ENCODE measurements at regions of chr10 and their contacts with region 1.

Region 1: GRCh38 chr10:80144067-80144695 is 11.7 kb downstream of the PLAC9 start:
- DNase-seq: peak; percentile 36
- ATAC-seq: peak; percentile 69
- H3K4me3 Mint-ChIP-seq: peak overlapping the region; percentile 73
- H3K27ac Mint-ChIP-seq: peak overlapping the region; percentile 44
- H3K4me1 Mint-ChIP-seq: peaks cover 20% of the 10 kb centered on the region
- H3K27me3 Mint-ChIP-seq: peaks cover 6% of the 10 kb centered on the region

Region 2: GRCh38 chr10:80187465-80188409 is 43.6 kb after region 1 on chr10:
- CTCF ChIA-PET with region 1: interaction called, 12 read pairs
- POLR2A ChIA-PET with region 1: interaction called, 3 read pairs
- DNase-seq: peak; percentile 92
- ATAC-seq: peak; percentile 93
- H3K4me3 Mint-ChIP-seq: peak overlapping the region; percentile 55
- H3K27ac Mint-ChIP-seq: peak overlapping the region; percentile 89
- H3K4me1 Mint-ChIP-seq: peaks cover 69% of the 10 kb centered on the region
- H3K27me3 Mint-ChIP-seq: no peaks in the 10 kb centered on the region

Region 3: DNA sequence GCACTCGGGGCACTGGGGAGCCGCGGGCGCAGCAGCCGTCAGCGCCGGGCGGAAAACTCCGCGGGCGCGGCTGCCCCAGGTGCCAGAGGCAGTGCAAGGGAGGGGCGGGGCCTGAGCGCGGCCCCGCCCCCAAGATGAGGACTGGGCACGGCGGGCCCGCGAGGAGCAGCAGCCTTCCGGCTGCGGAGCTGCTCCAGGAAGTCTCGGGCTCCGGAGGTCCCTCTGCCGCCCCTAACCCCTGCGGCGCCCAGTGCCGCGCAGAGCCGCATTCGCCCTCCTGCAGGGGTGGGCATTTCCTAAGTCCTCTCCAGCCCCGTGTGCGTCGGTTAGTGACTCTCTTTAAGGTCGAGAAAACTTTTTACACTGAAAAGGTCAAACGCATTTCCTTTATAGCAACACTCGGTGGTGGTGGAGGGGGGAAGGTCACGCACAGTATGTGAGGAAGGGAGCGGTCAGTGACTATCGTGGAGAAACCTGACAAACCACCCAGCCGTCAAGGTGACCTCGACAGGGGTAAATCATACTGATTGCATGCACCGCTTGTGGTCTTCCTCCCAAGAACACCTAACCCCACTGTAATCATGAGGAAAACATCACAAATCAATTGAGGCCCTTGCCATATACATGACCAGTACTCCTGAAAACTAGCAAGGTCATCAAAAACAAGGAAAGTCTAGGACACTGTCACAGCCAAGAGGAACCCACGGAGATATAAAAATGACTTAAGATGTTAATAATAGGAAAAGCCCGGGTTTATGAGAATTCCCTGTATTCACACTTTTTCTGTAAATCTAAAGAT is 61.5 kb after region 1 on chr10 and contains the start of gene ANXA11:
- CTCF ChIA-PET with region 1: interaction called, 30 read pairs
- POLR2A ChIA-PET with region 1: interaction called, 3 read pairs
- DNase-seq: peak; percentile 88
- ATAC-seq: peak; percentile 87
- H3K4me3 Mint-ChIP-seq: peak within 1 kb of the TSS; percentile 95
- H3K27ac Mint-ChIP-seq: peak within 1 kb of the TSS; percentile 91
- H3K4me1 Mint-ChIP-seq: peaks cover 50% of the 10 kb centered on the region
- H3K27me3 Mint-ChIP-seq: no peaks in the 10 kb centered on the region
- total RNA-seq, gene ANXA11: 249 to 277 TPM

Region 4: GRCh38 chr10:80253266-80254245 is 109.4 kb after region 1 on chr10:
- CTCF ChIA-PET with region 1: interaction called, 20 read pairs
- POLR2A ChIA-PET with region 1: interaction called, 4 read pairs
- DNase-seq: peak; percentile 54
- ATAC-seq: peak; percentile 62
- H3K4me3 Mint-ChIP-seq: no peak overlapping the region
- H3K27ac Mint-ChIP-seq: peak overlapping the region; percentile 90
- H3K4me1 Mint-ChIP-seq: peaks cover 21% of the 10 kb centered on the region
- H3K27me3 Mint-ChIP-seq: peaks cover 9% of the 10 kb centered on the region

Region 5: DNA sequence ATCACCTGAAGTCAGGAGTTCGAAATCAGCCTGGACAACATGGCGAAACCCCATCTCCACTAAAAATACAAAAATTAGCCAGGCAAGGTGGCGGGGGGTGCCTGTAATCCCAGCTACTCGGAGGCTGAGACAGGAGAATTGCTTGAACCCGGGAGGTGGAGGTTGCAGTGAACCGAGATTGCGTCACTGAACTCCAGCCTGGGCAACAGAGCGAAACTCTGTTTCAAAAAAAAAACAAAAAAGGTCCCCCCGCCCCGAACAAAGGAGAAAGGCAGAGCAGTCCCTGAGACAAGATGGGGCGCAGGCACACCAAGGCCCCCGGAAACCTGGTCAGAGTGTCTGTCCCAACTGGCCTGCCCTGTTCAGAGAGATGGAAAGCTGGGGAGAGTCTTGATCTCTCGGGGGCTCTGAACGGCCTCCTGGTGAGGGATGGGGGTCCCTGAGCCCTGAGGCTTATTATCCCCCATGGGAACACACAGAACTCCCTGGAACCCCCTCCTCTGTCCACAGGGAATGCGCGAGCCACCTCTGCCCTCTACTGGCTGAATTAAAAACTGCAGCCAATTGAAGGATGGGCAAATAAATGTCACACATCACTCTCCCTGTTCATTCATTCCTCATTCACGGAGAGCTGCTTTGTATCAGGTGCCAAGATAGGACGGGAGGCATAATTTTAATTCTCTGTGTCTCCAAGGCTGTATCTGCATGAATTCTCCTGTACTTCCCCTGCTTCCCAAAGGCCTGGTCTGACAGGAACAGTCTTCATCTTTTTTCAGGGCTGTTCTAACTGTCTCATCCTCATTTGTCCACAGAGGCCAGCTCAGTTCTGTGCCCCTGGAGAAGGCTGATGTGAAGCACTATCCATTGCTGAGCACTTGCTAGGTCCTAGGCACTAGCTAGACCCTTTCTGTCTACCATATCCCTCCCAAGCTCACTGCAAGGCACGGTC is 116.4 kb after region 1 on chr10:
- CTCF ChIA-PET with region 1: interaction called, 20 read pairs
- POLR2A ChIA-PET with region 1: interaction called, 3 read pairs
- DNase-seq: peak; percentile 50
- ATAC-seq: peak; percentile 45
- H3K4me3 Mint-ChIP-seq: no peak overlapping the region
- H3K27ac Mint-ChIP-seq: no peak overlapping the region
- H3K4me1 Mint-ChIP-seq: peaks cover 3% of the 10 kb centered on the region
- H3K27me3 Mint-ChIP-seq: peaks cover 11% of the 10 kb centered on the region

Region 6: DNA sequence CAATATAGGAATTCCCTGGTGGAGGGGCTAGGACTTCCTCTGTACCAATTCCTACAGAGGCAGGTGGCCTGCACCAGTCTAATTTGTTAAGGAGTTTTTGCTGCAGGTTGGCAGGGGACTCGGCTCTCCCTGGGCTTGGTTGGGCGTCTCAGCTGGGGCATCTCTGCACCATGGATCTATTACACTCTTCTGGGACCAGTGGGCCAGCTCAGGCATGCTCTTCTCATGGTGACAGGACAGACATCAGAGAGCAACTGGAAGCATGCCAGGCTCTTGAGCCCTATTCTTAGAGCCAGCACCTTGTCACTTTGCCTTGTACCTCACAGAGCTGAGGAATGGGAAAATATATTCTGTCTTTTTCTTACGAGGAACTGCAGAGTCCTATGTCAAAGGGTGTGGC is 468.1 kb after region 1 on chr10:
- CTCF ChIA-PET with region 1: no interaction called
- POLR2A ChIA-PET with region 1: no interaction called
- DNase-seq: no peak
- ATAC-seq: no peak
- H3K4me3 Mint-ChIP-seq: no peak overlapping the region
- H3K27ac Mint-ChIP-seq: no peak overlapping the region
- H3K4me1 Mint-ChIP-seq: peaks cover 8% of the 10 kb centered on the region
- H3K27me3 Mint-ChIP-seq: peaks cover 10% of the 10 kb centered on the region

Measured in activated CD8-positive, alpha-beta T cell treated with anti-CD3 and anti-CD28 coated beads, Interleukin-2, amount 10 ng/mL, durations not matched to agents 7 days and 5 days (primary cell).